ENCODE measurements at regions of chr2 and their contacts with region 1.

Region 1: DNA sequence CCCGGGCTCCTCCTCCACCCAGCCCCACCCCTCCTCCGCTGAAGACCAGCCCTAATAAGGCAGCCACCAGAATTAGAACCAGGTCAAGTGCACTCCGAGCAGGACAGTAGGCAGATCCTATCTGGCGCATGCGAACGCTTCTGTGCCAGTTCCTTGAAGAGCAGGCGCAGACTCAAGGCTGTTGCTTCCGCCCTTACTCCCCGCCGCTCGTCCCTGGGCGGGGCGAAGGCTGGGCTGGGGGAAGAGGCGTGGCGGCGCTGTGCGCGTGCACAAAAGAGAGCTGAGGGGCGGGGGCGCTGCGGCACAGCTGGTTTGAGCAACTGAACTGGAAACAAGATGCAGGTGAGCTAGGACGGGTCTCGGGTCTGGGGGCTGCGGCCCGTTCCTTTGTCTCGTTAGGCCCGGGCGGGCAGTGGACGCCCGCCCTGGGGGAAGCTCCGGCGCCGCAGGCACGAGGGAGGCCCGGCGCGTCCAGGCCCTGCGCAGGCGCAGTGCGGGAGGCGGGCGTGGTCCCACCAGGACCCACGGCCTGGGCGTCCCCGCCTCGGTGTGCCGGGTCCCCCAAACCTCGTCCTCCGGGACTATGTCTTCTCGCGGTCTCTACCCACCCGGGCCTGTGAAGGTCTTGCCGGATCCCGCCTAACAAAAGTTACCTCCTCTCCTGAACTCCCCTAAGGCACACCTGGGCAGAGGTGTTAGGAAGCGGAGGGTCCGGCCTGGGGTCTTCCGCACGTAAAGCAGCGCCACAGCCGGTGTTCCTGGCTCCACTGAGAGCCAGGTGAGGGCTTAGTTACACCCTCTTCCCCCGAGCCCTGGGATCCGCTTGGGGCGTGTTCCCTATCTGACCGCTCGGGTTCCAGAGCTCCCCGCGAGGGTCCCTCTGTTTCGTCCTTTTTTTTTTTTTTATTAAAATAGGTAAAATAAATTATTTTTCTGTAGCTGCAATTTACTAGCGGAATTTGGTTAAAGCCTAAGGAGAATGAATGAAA is at the start of gene PDCL3:
- DNase-seq: peak; percentile 88 to 98 (median 94)
- ATAC-seq: peak; percentile 88
- H3K4me3 ChIP-seq: peak within 1 kb of the TSS; percentile 89
- H3K4me3 Mint-ChIP-seq: peak within 1 kb of the TSS; percentile 94
- H3K27ac ChIP-seq: peak within 1 kb of the TSS; percentile 74 to 78
- H3K27ac Mint-ChIP-seq: peak within 1 kb of the TSS; percentile 97
- H3K4me1 ChIP-seq: peaks cover 40% of the 10 kb centered on the region
- H3K4me1 Mint-ChIP-seq: peaks cover 46% of the 10 kb centered on the region
- H3K27me3 ChIP-seq: no peaks in the 10 kb centered on the region
- H3K27me3 Mint-ChIP-seq: no peaks in the 10 kb centered on the region
- CTCF ChIP-seq: no peak
- total RNA-seq, gene PDCL3: 31.7 to 34.6 TPM

Region 2: GRCh38 chr2:100580367-100581276 is 17.6 kb after region 1 on chr2:
- CTCF ChIA-PET with region 1: interaction called, 14 read pairs
- POLR2A ChIA-PET with region 1: interaction called, 101 read pairs
- intact Hi-C with region 1: loop called in 1 of 2 experiments (anchors 2 kb)
- DNase-seq: peak; percentile 26 to 84 (median 56)
- ATAC-seq: peak; percentile 80
- H3K4me3 ChIP-seq: peak overlapping the region; percentile 21
- H3K4me3 Mint-ChIP-seq: peak overlapping the region; percentile 2
- H3K27ac ChIP-seq: peak overlapping the region; percentile 82 to 83
- H3K27ac Mint-ChIP-seq: peak overlapping the region; percentile 90
- H3K4me1 ChIP-seq: peaks cover 40% of the 10 kb centered on the region
- H3K4me1 Mint-ChIP-seq: peaks cover 45% of the 10 kb centered on the region
- H3K27me3 ChIP-seq: no peaks in the 10 kb centered on the region
- H3K27me3 Mint-ChIP-seq: no peaks in the 10 kb centered on the region
- CTCF ChIP-seq: no peak

Region 3: DNA sequence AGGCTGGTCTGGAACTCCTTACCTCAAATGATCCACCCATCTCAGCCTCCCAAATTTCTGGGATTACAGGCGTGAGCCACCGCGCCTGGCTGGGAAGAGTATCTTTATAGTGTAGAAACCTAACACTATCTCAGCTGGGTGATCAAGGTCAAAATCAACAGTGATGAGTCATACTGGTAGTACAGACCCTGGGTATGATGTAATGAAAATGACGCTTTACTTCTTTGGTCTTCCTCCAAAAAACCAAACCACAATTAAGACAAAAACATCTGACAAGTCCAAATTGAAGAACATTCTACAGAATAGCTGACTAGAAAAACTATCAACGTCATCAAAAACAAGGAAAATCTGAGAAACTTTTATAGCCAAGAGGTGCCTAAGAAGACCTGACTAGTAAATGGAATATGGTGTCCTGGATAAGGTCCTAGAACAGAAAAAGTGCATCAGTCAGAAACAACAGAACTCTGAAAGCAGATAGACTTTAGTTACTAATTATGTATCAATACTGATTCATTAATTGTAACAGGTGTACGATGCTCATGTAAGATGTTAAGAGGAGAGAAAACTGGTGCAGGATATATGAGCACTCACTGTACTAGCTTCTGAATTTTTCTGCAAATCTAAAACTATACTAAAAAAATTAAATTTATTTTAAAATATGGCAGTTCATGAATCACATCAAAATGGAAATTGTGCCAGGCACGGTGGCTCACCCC is 25.2 kb after region 1 on chr2:
- CTCF ChIA-PET with region 1: no interaction called
- POLR2A ChIA-PET with region 1: interaction called, 20 read pairs
- intact Hi-C with region 1: no loop called
- DNase-seq: peak in 6 of 14 experiments; percentile 8 to 84 (median 52)
- ATAC-seq: peak; percentile 88
- H3K4me3 ChIP-seq: no peak overlapping the region
- H3K4me3 Mint-ChIP-seq: no peak overlapping the region
- H3K27ac ChIP-seq: no peak overlapping the region
- H3K27ac Mint-ChIP-seq: peak overlapping the region; percentile 32
- H3K4me1 ChIP-seq: peaks cover 9% of the 10 kb centered on the region
- H3K4me1 Mint-ChIP-seq: peaks cover 31% of the 10 kb centered on the region
- H3K27me3 ChIP-seq: no peaks in the 10 kb centered on the region
- H3K27me3 Mint-ChIP-seq: no peaks in the 10 kb centered on the region
- CTCF ChIP-seq: no peak

Region 4: DNA sequence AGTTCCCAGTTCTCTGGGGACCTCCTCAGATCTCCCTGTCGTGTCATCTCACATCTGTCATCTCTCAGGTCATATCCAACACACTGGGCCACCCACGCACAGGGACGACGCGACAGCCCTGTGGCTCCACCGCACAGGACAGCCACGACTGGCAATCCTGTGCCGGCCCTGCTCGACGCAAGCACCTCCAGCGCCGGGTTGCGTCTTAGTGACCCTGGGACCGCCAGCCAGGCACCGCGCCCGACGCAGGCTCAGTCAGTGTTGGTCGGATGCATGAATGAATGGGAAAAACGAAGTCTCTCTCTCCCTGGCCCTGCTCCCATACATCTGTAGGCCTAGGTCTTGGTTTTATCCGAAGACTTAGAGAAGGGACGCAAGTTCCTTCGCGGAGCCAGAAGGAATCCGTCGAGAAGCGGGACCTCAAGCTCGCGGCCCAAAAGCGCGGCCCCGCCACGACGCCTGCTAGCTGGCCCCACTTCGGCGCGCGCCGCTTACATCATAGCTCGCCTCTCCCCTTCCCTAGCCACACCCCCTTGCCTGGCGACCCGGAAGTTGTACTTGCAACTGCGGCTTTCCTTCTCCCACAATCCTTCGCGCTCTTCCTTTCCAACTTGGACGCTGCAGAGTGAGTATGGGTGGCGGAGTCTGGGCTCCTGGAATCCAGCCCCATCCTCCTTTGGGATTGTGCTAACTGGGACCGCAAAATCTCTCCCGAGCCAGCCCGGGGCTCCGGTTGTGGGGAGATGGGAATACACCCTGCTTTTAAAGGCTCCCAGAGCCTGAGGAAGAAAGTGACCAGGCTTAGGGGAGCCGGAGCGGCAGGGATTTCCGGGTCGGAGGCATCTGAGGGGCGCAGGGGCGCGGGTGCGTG is 438.9 kb after region 1 on chr2 and contains the start of gene RPL31:
- CTCF ChIA-PET with region 1: interaction called, 3 read pairs
- POLR2A ChIA-PET with region 1: interaction called, 40 read pairs
- intact Hi-C with region 1: loop called in 1 of 2 experiments (anchors 1 kb)
- DNase-seq: peak; percentile 90 to 98 (median 94)
- ATAC-seq: peak; percentile 95
- H3K4me3 ChIP-seq: peak within 1 kb of the TSS; percentile 82
- H3K4me3 Mint-ChIP-seq: peak within 1 kb of the TSS; percentile 90
- H3K27ac ChIP-seq: peak within 1 kb of the TSS; percentile 80 to 83
- H3K27ac Mint-ChIP-seq: peak within 1 kb of the TSS; percentile 91
- H3K4me1 ChIP-seq: peaks cover 36% of the 10 kb centered on the region
- H3K4me1 Mint-ChIP-seq: peaks cover 52% of the 10 kb centered on the region
- H3K27me3 ChIP-seq: no peaks in the 10 kb centered on the region
- H3K27me3 Mint-ChIP-seq: no peaks in the 10 kb centered on the region
- CTCF ChIP-seq: no peak
- total RNA-seq, gene RPL31: 2,901 to 2,913 TPM

Region 5: GRCh38 chr2:101151141-101151858 is 588.3 kb after region 1 on chr2 and contains the start of gene TBC1D8:
- CTCF ChIA-PET with region 1: no interaction called
- POLR2A ChIA-PET with region 1: no interaction called
- intact Hi-C with region 1: loop called in 1 of 2 experiments (anchors 10 kb)
- DNase-seq: peak; percentile 27 to 84 (median 52)
- ATAC-seq: peak; percentile 86
- H3K4me3 ChIP-seq: peak within 1 kb of the TSS; percentile 72
- H3K4me3 Mint-ChIP-seq: peak within 1 kb of the TSS; percentile 89
- H3K27ac ChIP-seq: no peak within 1 kb of the TSS
- H3K27ac Mint-ChIP-seq: peak within 1 kb of the TSS; percentile 26
- H3K4me1 ChIP-seq: peaks cover 28% of the 10 kb centered on the region
- H3K4me1 Mint-ChIP-seq: peaks cover 34% of the 10 kb centered on the region
- H3K27me3 ChIP-seq: peaks cover 0 to 5% of the 10 kb centered on the region in 2 experiments
- H3K27me3 Mint-ChIP-seq: peaks cover 23% of the 10 kb centered on the region
- CTCF ChIP-seq: no peak
- total RNA-seq, gene TBC1D8: 1.0 to 1.8 TPM